CD4-positive, alpha-beta memory T cell (primary cell): ENCODE measurements at regions of chr10 and their contacts with region 1.

Region 1: GRCh38 chr10:5434017-5434753 is 21.8 kb downstream of the NET1 start:
- DNase-seq: peak in 4 of 5 donors; percentile 32 to 46 (median 40)
- H3K4me3 ChIP-seq: no peak overlapping the region
- H3K4me3 Mint-ChIP-seq: peak overlapping the region in 5 of 8 donors; percentile 25 to 45 (median 37)
- H3K27ac ChIP-seq: no peak overlapping the region
- H3K27ac Mint-ChIP-seq: peak overlapping the region in 6 of 7 donors; percentile 28 to 90 (median 84)
- H3K4me1 ChIP-seq: peaks cover 6% of the 10 kb centered on the region
- H3K4me1 Mint-ChIP-seq: peaks cover 6 to 13% (median 11%) of the 10 kb centered on the region in 4 donors
- H3K27me3 ChIP-seq: no peaks in the 10 kb centered on the region
- H3K27me3 Mint-ChIP-seq: no peaks in the 10 kb centered on the region

Region 2: GRCh38 chr10:5283305-5284158 is 150.7 kb before region 1 on chr10:
- CTCF ChIA-PET with region 1: interaction called, 5 read pairs
- POLR2A ChIA-PET with region 1: no interaction called
- intact Hi-C with region 1: loop called (anchors 5 kb)
- DNase-seq: peak; percentile 47 to 64 (median 50)
- H3K4me3 ChIP-seq: no peak overlapping the region
- H3K4me3 Mint-ChIP-seq: peak overlapping the region in 5 of 8 donors; percentile 37 to 68 (median 50)
- H3K27ac ChIP-seq: peak overlapping the region; percentile 23
- H3K27ac Mint-ChIP-seq: peak overlapping the region in 6 of 7 donors; percentile 12 to 91 (median 35)
- H3K4me1 ChIP-seq: peaks cover 21% of the 10 kb centered on the region
- H3K4me1 Mint-ChIP-seq: peaks cover 14 to 35% (median 22%) of the 10 kb centered on the region in 4 donors
- H3K27me3 ChIP-seq: no peaks in the 10 kb centered on the region
- H3K27me3 Mint-ChIP-seq: peaks cover 0 to 7% of the 10 kb centered on the region in 2 donors

Region 3: DNA sequence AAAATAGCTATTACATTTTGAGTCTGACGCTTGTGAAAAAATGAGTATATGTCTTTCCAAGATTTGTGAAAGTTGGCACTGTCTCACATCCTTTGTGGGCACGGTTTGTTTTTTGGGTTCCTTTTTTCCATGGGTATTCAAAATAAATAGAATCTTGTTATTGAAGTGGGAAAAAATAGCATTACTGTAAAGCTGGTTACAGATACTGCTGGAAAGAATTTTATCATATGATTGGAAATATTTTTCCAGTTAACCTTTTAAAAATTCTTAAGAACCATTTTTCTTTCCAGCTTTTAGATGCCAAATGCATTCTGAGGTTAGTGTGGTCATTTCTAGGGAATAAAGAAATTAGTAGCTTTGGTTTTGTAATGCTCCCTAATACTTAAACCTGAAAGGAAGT is 10.4 kb before region 1 on chr10:
- CTCF ChIA-PET with region 1: interaction called, 27 read pairs
- POLR2A ChIA-PET with region 1: no interaction called
- intact Hi-C with region 1: no loop called
- DNase-seq: no peak
- H3K4me3 ChIP-seq: no peak overlapping the region
- H3K4me3 Mint-ChIP-seq: no peak overlapping the region
- H3K27ac ChIP-seq: no peak overlapping the region
- H3K27ac Mint-ChIP-seq: no peak overlapping the region
- H3K4me1 ChIP-seq: no peaks in the 10 kb centered on the region
- H3K4me1 Mint-ChIP-seq: no peaks in the 10 kb centered on the region
- H3K27me3 ChIP-seq: no peaks in the 10 kb centered on the region
- H3K27me3 Mint-ChIP-seq: no peaks in the 10 kb centered on the region

Region 4: GRCh38 chr10:5453749-5454489 is 19.7 kb after region 1 on chr10:
- CTCF ChIA-PET with region 1: no interaction called
- POLR2A ChIA-PET with region 1: no interaction called
- intact Hi-C with region 1: no loop called
- DNase-seq: no peak
- H3K4me3 ChIP-seq: no peak overlapping the region
- H3K4me3 Mint-ChIP-seq: no peak overlapping the region
- H3K27ac ChIP-seq: no peak overlapping the region
- H3K27ac Mint-ChIP-seq: peak overlapping the region in 1 of 7 donors; percentile 25
- H3K4me1 ChIP-seq: peaks cover 7% of the 10 kb centered on the region
- H3K4me1 Mint-ChIP-seq: peaks cover 4 to 13% (median 7%) of the 10 kb centered on the region in 4 donors
- H3K27me3 ChIP-seq: no peaks in the 10 kb centered on the region
- H3K27me3 Mint-ChIP-seq: no peaks in the 10 kb centered on the region

Region 5: DNA sequence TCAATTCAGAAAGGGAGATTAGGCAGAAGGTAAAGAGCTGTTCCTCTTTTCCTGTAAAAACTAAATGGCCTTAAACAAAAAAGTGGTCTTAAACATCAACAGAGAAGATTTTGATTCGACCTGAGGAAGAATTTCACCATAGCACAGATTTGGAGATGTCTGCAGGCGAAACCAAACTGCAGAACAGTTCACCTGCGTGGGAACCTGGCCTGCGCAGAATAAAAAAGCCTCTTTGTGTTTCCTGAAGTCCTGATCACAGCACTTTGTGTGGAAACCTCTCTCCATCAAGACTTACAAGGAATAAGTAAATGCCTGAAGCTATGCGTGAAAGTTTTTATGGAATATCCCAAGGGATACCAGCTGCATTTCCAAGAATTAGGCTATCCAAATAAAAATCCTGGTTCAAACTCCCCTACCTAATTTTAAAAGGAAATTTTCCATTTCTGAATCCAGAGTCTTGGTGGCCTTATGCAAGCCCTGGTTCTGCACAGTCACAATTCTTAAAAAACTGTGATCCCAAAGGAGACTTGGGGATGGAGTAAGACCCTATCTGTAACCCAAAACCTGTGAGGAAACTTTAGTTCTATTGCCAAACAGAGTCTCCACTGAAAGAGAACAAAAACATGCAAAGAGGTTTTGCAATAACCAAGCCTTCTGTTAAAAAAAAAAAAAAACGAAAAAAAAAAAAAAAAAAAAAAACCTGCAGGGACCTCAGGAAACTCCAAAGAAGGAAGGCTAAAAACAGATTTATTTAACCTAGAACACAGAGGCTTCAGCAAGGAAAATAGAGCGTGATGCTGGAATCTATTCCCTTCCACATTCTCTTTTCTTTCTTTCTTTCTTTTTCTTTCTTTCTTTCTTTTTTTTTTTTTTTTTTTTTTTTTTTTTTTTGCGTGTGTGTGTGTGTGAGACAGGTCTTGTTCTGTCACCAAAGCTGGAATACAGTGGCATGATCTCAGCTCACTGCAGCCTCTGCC is 101.0 kb after region 1 on chr10:
- CTCF ChIA-PET with region 1: no interaction called
- POLR2A ChIA-PET with region 1: no interaction called
- intact Hi-C with region 1: no loop called
- DNase-seq: no peak
- H3K4me3 ChIP-seq: no peak overlapping the region
- H3K4me3 Mint-ChIP-seq: no peak overlapping the region
- H3K27ac ChIP-seq: no peak overlapping the region
- H3K27ac Mint-ChIP-seq: no peak overlapping the region
- H3K4me1 ChIP-seq: peaks cover 4% of the 10 kb centered on the region
- H3K4me1 Mint-ChIP-seq: no peaks in the 10 kb centered on the region
- H3K27me3 ChIP-seq: no peaks in the 10 kb centered on the region
- H3K27me3 Mint-ChIP-seq: no peaks in the 10 kb centered on the region

Region 6: GRCh38 chr10:5623081-5623748 is 189.0 kb after region 1 on chr10:
- CTCF ChIA-PET with region 1: interaction called, 468 read pairs
- POLR2A ChIA-PET with region 1: interaction called, 3 read pairs
- intact Hi-C with region 1: no loop called
- DNase-seq: peak; percentile 68 to 75 (median 70)
- H3K4me3 ChIP-seq: no peak overlapping the region
- H3K4me3 Mint-ChIP-seq: no peak overlapping the region
- H3K27ac ChIP-seq: no peak overlapping the region
- H3K27ac Mint-ChIP-seq: no peak overlapping the region
- H3K4me1 ChIP-seq: no peaks in the 10 kb centered on the region
- H3K4me1 Mint-ChIP-seq: peaks cover 0 to 7% (median 3%) of the 10 kb centered on the region in 4 donors
- H3K27me3 ChIP-seq: no peaks in the 10 kb centered on the region
- H3K27me3 Mint-ChIP-seq: no peaks in the 10 kb centered on the region